ENCODE measurements at regions of chr2 and their contacts with region 1.

Region 1: DNA sequence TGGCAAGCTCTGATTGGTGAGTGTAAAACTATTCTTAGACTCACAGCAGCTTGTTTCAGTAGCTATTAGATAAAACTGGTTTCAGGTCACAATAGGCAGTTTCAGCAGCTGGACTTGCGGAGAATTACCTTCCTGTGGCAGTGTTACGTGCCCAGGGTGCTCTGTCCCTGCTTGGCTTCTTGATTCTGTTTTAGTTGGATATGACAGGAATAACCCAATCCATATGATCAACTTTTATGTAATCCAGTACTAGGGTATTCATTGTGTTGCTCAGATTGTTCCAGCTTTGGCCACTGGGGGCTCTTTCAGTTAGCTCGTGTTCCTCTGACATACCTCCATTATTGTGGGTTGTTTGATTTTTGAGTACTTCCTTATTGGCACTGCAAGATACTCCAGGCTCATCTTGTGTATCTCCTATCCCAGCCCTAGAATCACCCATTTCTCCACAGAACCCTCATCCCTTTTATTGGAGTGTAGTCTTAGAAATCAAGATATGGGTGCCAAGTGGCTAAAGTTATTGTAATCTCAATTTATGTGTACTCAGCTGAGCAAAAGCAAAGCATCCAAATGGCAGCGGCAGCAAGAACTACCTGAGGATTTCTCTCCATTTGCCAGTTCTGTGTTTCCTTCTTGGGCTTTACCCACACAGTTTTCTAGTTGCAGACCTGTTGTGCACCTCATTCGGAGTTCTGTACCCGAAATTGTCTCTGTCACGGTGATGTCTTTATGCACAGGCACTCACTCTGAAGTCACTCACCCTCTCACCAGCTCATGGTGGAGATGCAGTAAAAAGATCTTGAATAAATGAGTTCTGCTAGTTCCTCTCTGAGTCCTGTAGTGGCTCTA is 43.4 kb downstream of the INPP4A start:
- DNase-seq: peak; percentile 57 to 72 (median 70)
- H3K4me3 ChIP-seq: no peak overlapping the region
- H3K4me3 Mint-ChIP-seq: no peak overlapping the region
- H3K27ac ChIP-seq: peak overlapping the region in 1 of 2 donors; percentile 75
- H3K27ac Mint-ChIP-seq: peak overlapping the region; percentile 35 to 87 (median 84)
- H3K4me1 ChIP-seq: peaks cover 35 to 40% of the 10 kb centered on the region in 2 donors
- H3K4me1 Mint-ChIP-seq: peaks cover 69% of the 10 kb centered on the region
- H3K27me3 ChIP-seq: no peaks in the 10 kb centered on the region
- H3K27me3 Mint-ChIP-seq: peaks cover 0 to 1% (median 0%) of the 10 kb centered on the region in 3 donors
- CTCF ChIP-seq: peak; percentile 82

Region 2: GRCh38 chr2:98444436-98445176 is 43.4 kb before region 1 on chr2 and contains the start of gene INPP4A:
- intact Hi-C with region 1: loop called in 1 of 2 experiments (anchors 5 kb)
- DNase-seq: peak; percentile 45 to 70 (median 64)
- H3K4me3 ChIP-seq: peak within 1 kb of the TSS; percentile 65 to 98 (median 79)
- H3K4me3 Mint-ChIP-seq: peak within 1 kb of the TSS; percentile 97 to 99
- H3K27ac ChIP-seq: peak within 1 kb of the TSS; percentile 53 to 84
- H3K27ac Mint-ChIP-seq: peak within 1 kb of the TSS; percentile 94 to 98 (median 96)
- H3K4me1 ChIP-seq: peaks cover 27 to 37% of the 10 kb centered on the region in 2 donors
- H3K4me1 Mint-ChIP-seq: peaks cover 42% of the 10 kb centered on the region
- H3K27me3 ChIP-seq: no peaks in the 10 kb centered on the region
- H3K27me3 Mint-ChIP-seq: peaks cover 0 to 3% (median 0%) of the 10 kb centered on the region in 3 donors
- CTCF ChIP-seq: no peak
- polyA plus RNA-seq, gene INPP4A: 13.7 to 52.4 (median 20.7) TPM

Measured in CD14-positive monocyte (primary cell).